ENCODE measurements at regions of chr6 and their contacts with region 1.

Region 1: GRCh38 chr6:108052706-108053105 is 21.8 kb downstream of the OSTM1 start:
- DNase-seq: no peak
- ATAC-seq: peak in 1 of 8 donors; percentile 42
- H3K4me3 ChIP-seq: no peak overlapping the region
- H3K27ac ChIP-seq: no peak overlapping the region
- H3K4me1 ChIP-seq: peaks cover 0 to 8% (median 0%) of the 10 kb centered on the region in 9 donors
- H3K27me3 ChIP-seq: no peaks in the 10 kb centered on the region
- CTCF ChIP-seq: no peak

Region 2: GRCh38 chr6:107977283-107977682 is 75.4 kb before region 1 on chr6:
- intact Hi-C with region 1: loop called in 5 of 10 experiments (anchors 5 to 10 kb)
- DNase-seq: no peak
- ATAC-seq: no peak
- H3K4me3 ChIP-seq: no peak overlapping the region
- H3K27ac ChIP-seq: no peak overlapping the region
- H3K4me1 ChIP-seq: no peaks in the 10 kb centered on the region
- H3K27me3 ChIP-seq: no peaks in the 10 kb centered on the region
- CTCF ChIP-seq: peak in 7 of 9 donors; percentile 26 to 52 (median 39)

Region 3: GRCh38 chr6:107982486-107982885 is 70.2 kb before region 1 on chr6:
- intact Hi-C with region 1: loop called in 5 of 10 experiments (anchors 5 to 10 kb)
- DNase-seq: no peak
- ATAC-seq: no peak
- H3K4me3 ChIP-seq: no peak overlapping the region
- H3K27ac ChIP-seq: no peak overlapping the region
- H3K4me1 ChIP-seq: no peaks in the 10 kb centered on the region
- H3K27me3 ChIP-seq: peaks cover 0 to 5% (median 0%) of the 10 kb centered on the region in 7 donors
- CTCF ChIP-seq: no peak

Region 4: DNA sequence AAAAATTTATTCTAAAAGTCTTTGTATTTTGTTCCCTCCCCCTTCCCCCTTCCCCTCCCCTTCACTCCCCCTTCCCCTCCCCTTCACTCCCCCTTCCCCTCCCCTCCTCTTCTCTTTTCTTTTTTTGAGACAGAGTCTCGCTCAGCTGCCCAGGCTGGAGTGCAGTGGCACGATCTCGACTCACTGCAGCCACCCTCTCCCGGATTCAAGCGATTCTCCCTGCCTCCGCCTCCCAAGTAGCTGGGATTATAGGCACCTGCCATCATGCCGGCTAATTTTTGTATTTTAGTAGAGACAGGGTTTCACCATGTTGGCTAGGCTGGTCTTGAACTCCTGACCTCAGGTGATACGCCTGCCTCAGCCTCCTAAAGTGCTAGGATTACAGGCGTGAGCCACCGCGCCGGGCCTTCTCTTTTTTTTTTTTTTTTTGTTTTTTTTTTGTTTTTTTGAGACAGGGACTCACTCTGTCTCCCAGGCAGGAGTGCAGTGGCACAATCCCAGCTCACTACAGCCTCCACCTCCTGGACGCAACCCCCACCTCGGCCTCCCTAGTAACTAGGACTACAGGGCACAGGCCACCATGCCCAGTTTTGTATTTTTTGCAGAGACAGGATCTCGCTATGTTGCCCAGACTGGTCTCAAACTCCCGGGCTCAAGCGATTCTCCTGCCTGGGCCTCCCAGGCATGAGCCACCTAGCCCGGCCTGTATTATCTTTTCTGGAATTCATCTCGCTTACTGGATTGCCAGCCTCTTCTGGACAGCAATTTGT is 241.0 kb after region 1 on chr6:
- intact Hi-C with region 1: no loop called
- DNase-seq: no peak
- ATAC-seq: no peak
- H3K4me3 ChIP-seq: peak overlapping the region in 9 of 10 donors; percentile 62 to 96 (median 77)
- H3K27ac ChIP-seq: peak overlapping the region in 7 of 10 donors; percentile 94 to 99 (median 95)
- H3K4me1 ChIP-seq: peaks cover 0 to 18% (median 10%) of the 10 kb centered on the region in 9 donors
- H3K27me3 ChIP-seq: no peaks in the 10 kb centered on the region
- CTCF ChIP-seq: no peak

Measured in heart right ventricle (tissue), 16 donors.